GM12878 (cell line): ENCODE measurements at regions of chr20 and their contacts with region 1.

Region 1: GRCh38 chr20:3781153-3781910 is at the start of gene SPEF1:
- DNase-seq: peak; percentile 33
- ATAC-seq: peak; percentile 84
- H3K4me3 ChIP-seq: 0 out of 2 replicates have a peak within 1 kb of the TSS, but pooled peaks have one; percentile 46
- H3K27ac ChIP-seq: no peak within 1 kb of the TSS
- H3K4me1 ChIP-seq: peaks cover 25% of the 10 kb centered on the region
- H3K27me3 ChIP-seq: peaks cover 12 to 16% of the 10 kb centered on the region in 2 experiments
- CTCF ChIP-seq: peak in 2 of 3 experiments; percentile 18 to 33; a peak in 2 of 6 replicates
- EP300 ChIP-seq: no peak
- POLR2A ChIP-seq: peak; percentile 32; the same call in 1 of the 2 replicates
- RAD21 ChIP-seq: no peak
- polyA plus RNA-seq, gene SPEF1: not detected

Region 2: DNA sequence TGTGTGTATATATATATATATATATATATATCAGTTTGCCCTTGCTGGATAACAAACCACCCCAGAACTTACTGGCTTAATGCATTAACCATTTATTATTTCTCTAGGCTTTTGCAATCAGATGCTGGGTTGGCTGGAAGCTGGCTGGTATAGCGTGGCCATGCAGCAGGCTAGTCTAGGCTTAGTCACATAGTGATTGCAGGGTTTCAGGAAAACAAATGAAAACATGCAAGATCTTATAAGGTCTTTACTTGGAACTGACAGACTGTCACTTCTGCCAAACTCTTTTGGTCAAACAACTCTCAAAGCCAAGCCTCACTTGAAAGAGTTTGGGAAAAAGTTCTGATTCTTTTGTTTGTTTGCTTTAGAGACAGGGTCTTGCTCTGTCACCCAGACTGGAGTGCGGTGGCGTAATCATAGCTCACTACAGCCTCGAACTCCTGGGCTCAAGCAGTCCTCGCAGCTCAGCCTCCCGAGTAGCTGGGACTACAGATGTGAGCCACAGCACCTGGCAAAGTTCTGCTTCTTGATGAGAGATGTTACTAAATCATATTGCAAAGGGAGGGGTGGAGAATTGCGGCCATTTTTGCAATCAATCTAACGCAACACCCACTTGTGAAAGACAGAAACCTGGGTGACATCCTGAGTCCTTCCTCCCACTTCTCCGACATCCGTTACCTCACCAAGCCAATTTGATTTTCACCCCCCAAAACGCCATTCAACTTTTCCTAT is 308.6 kb after region 1 on chr20:
- CTCF ChIA-PET with region 1: interaction called, 13 read pairs
- POLR2A ChIA-PET with region 1: no interaction called
- RAD21 ChIA-PET with region 1: interaction called, 3 read pairs
- SMC1A ChIA-PET with region 1: interaction called, 4 read pairs
- in situ Hi-C with region 1: loop called (anchors 5 kb)
- intact Hi-C with region 1: no loop called
- DNase-seq: no peak
- ATAC-seq: no peak
- H3K4me3 ChIP-seq: no peak overlapping the region
- H3K27ac ChIP-seq: no peak overlapping the region
- H3K4me1 ChIP-seq: peaks cover 6% of the 10 kb centered on the region
- H3K27me3 ChIP-seq: no peaks in the 10 kb centered on the region; a peak in 1 of 4 replicates
- CTCF ChIP-seq: no peak
- EP300 ChIP-seq: no peak
- POLR2A ChIP-seq: no peak
- RAD21 ChIP-seq: no peak

Region 3: DNA sequence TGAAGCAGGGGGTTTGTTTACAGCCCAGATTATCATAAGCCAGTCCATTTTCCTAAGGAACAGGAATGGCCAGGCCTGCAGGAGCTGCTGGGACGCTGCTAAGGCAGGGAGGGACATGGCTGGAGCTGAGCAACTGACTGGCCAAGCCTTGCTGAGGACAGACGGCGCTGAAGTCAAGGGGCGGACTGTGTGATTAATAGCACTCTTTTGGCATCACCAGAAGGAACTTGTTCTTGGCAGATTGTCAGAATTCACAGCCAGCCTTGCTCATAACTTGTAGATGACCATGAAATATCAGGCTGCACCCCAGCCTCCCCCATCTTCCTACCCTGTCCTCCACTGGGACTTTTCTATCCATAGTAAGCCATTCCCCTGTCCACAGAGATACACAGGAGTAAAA is 452.8 kb after region 1 on chr20:
- CTCF ChIA-PET with region 1: no interaction called
- POLR2A ChIA-PET with region 1: no interaction called
- RAD21 ChIA-PET with region 1: no interaction called
- SMC1A ChIA-PET with region 1: no interaction called
- in situ Hi-C with region 1: no loop called
- intact Hi-C with region 1: no loop called
- DNase-seq: no peak
- ATAC-seq: no peak
- H3K4me3 ChIP-seq: no peak overlapping the region
- H3K27ac ChIP-seq: no peak overlapping the region
- H3K4me1 ChIP-seq: no peaks in the 10 kb centered on the region
- H3K27me3 ChIP-seq: peaks cover 0 to 5% of the 10 kb centered on the region in 2 experiments; a peak in 2 of 4 replicates
- CTCF ChIP-seq: no peak
- EP300 ChIP-seq: no peak
- POLR2A ChIP-seq: no peak
- RAD21 ChIP-seq: no peak